HEK293 (cell line): ENCODE measurements at regions of chr9 and their contacts with region 1.

Region 1: GRCh38 chr9:73050065-73050816 is 97.4 kb upstream of the ALDH1A1 start:
- H3K4me3 ChIP-seq: no peak overlapping the region
- H3K27ac ChIP-seq: no peak overlapping the region
- H3K4me1 ChIP-seq: no peaks in the 10 kb centered on the region
- CTCF ChIP-seq: no peak

Region 2: DNA sequence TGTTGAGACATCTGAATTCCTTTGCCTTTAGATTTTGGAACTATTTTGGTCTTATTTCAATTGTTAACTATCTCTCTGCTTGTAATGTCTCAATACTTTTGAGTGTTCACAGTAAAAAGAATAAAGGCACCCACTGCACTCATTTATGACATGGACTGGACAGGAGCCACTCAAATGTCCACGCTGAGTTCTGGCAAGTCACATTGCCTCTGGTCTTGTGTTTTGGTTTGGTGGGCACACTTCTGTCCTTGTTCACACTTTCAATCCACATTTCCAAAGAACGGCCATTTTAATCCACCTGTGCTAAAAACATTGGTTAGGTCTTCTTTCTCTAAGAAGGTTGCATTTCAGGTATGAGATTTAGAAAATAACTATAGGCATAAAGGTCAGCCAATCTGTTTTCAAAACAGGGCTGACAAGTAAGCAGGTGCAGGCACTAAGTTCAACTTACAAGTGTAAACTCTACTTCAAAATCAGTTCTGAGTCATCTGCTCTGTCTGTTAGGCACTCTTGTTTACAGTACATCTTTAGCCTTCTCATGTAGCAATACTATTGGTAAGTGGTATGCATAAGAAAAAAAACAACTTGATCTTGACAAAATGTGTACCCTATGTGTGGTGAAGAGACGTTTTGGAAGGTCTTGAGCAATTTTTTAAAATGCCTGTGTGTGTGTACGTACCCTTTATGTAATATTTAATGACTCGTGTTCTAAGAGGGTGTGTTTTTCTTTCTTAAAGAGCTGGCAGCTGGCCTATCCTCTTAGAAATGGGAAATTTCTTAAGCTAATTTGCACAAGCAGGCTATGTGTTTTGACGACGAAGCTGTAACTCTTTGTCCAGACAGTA is 653.8 kb before region 1 on chr9:
- CTCF ChIA-PET with region 1: no interaction called
- POLR2A ChIA-PET with region 1: no interaction called
- H3K4me3 ChIP-seq: no peak overlapping the region
- H3K27ac ChIP-seq: no peak overlapping the region
- H3K4me1 ChIP-seq: peaks cover 6% of the 10 kb centered on the region; the same call in 1 of the 2 replicates
- CTCF ChIP-seq: no peak

Region 3: DNA sequence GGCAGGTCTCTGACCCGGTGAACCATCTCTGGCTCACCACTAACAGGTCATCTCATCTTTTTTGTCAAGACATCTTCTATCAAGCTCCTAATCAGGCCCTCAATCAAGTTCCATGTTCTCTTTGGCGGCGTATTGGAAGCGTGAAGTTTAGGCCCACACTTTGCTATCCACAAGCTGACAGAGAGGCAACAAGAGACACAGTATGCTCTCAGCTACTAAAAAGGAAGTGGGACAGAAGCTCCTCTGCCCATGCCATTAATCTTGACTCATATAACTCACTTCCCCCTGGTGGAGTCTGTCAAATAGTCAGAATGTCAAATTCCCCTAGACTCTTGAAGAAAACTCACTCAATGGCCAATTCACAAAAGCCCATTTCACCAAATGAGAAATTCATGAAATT is 606.4 kb before region 1 on chr9:
- CTCF ChIA-PET with region 1: no interaction called
- POLR2A ChIA-PET with region 1: no interaction called
- H3K4me3 ChIP-seq: no peak overlapping the region
- H3K27ac ChIP-seq: no peak overlapping the region
- H3K4me1 ChIP-seq: no peaks in the 10 kb centered on the region
- CTCF ChIP-seq: no peak

Region 4: GRCh38 chr9:72734631-72735030 is 315.6 kb before region 1 on chr9:
- CTCF ChIA-PET with region 1: no interaction called
- POLR2A ChIA-PET with region 1: no interaction called
- H3K4me3 ChIP-seq: no peak overlapping the region
- H3K27ac ChIP-seq: no peak overlapping the region
- H3K4me1 ChIP-seq: no peaks in the 10 kb centered on the region
- CTCF ChIP-seq: no peak

Region 5: DNA sequence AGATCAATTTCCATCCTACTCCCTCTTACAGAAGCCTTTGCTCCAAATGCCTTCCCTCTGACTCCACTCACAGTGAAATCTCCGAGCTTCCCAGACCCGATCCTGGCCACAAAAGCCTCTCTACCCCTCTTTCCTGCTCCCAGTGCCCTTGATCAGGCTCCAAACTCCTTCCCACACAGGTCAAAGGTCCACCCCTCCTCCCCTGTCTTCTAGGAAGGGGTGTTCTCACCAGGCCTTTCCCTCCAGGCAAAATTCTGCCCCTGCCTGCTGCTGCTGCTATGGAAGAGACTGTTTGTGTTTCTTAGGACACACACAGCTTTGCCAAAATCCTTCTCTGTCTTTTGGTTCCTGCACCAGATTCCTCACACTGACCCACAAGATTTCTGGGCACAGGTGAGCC is 11.6 kb before region 1 on chr9:
- CTCF ChIA-PET with region 1: interaction called, 4 read pairs
- POLR2A ChIA-PET with region 1: interaction called, 13 read pairs
- H3K4me3 ChIP-seq: no peak overlapping the region
- H3K27ac ChIP-seq: no peak overlapping the region
- H3K4me1 ChIP-seq: 0 out of 2 replicates have a peak, but pooled peaks cover 2% of the 10 kb centered on the region
- CTCF ChIP-seq: no peak

Region 6: DNA sequence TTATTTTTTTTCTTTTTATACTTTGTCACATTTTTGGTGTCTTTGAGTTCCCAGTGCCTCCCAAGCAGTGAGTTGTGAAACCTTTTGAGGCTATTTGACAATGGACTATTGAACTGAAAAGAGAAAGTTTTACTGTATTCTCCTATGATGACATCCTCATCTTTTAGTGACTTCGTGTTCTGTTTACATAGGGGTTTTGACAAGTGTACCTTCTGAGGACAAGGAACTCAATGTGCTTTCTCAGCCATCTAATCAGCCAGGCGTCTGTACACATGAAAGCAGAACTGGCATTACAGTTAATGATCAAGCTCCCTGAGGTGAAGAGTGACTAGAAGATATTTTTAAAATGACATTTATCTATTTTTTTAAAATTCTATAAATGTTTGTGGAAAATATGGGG is 276.9 kb after region 1 on chr9:
- CTCF ChIA-PET with region 1: no interaction called
- POLR2A ChIA-PET with region 1: no interaction called
- H3K4me3 ChIP-seq: no peak overlapping the region
- H3K27ac ChIP-seq: no peak overlapping the region
- H3K4me1 ChIP-seq: no peaks in the 10 kb centered on the region
- CTCF ChIP-seq: no peak